Panc1 (cell line): ENCODE measurements at regions of chr9 and their contacts with region 1.

Region 1: GRCh38 chr9:136705564-136705963 is 6.8 kb upstream of the DIPK1B start:
- DNase-seq: no peak
- ATAC-seq: no peak
- H3K4me3 ChIP-seq: no peak overlapping the region
- H3K27ac ChIP-seq: no peak overlapping the region
- H3K4me1 ChIP-seq: no peaks in the 10 kb centered on the region; the same call in 1 of the 2 replicates
- H3K27me3 ChIP-seq: no peaks in the 10 kb centered on the region
- CTCF ChIP-seq: no peak

Region 2: DNA sequence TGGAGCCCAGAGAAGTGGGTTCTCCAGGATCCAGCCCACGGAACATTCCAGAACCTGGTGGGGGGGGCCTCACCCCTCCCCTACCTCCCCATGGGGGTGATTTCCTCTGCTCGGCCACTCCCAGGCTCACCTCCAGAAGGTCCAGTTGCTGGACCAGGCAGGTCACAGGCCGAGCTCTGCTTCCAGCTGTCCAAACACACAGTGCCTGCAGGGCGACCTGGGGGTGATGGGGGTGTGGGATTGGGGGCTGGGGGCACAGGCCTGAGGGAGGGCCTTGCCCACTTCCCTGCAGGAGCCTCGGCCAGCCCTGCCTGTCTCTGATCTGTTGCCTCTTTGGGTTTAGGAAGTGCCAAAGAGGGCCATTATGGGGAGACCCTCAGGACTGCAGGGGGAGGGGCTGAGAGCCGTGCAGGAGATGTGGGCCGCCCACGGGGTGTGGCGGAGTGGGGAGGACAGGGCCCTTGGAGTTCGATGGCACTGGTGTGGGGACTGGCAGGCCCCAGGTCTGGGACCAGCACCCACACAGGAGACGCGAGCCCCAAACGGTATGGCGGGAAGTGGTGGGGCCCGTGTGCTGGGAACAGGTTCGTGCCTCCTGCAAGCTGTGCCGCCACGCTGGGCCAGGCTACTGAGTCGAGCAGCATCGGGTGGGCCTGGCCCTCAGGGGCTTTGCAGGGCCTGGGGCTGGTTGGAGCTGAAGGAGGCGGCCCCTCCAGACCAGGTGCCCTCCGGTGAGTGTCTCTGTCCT is 88.4 kb before region 1 on chr9:
- CTCF ChIA-PET with region 1: no interaction called
- POLR2A ChIA-PET with region 1: interaction called, 11 read pairs
- in situ Hi-C with region 1: no loop called
- intact Hi-C with region 1: no loop called
- DNase-seq: no peak
- ATAC-seq: no peak
- H3K4me3 ChIP-seq: no peak overlapping the region
- H3K27ac ChIP-seq: no peak overlapping the region
- H3K4me1 ChIP-seq: no peaks in the 10 kb centered on the region; the same call in 1 of the 2 replicates
- H3K27me3 ChIP-seq: no peaks in the 10 kb centered on the region
- CTCF ChIP-seq: no peak